Uterus (tissue), 4 donors: ENCODE measurements at regions of chr13 and their contacts with region 1.

Region 1: DNA sequence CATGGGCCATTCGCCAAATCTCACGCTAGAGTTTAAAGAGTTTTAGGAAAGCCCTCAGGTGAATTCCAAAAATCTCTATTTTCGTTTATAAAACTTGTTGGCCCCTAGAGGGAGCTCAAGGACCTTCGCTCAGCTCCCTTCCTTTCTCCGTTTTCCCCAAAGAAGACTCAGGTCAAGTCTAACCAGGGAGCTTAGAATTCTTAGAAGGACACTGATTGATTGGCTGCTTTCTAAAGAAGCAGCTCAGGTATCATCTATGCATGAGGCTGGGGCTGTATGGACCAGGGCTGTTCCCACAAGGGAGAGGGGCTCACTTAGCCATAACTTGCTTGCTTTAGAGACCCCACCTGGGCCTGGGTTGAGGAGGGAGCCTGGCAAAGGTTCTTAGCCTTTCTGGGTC is 20.5 kb downstream of the DZIP1 start:
- DNase-seq: peak in 1 of 2 donors; percentile 16
- H3K4me3 ChIP-seq: no peak overlapping the region
- H3K27ac ChIP-seq: no peak overlapping the region
- H3K4me1 ChIP-seq: no peaks in the 10 kb centered on the region
- H3K27me3 ChIP-seq: no peaks in the 10 kb centered on the region
- CTCF ChIP-seq: peak; percentile 60 to 72 (median 66)
- POLR2A ChIP-seq: no peak

Region 2: GRCh38 chr13:95403828-95404522 is 220.0 kb before region 1 on chr13:
- intact Hi-C with region 1: no loop called
- DNase-seq: peak; percentile 67 to 81
- H3K4me3 ChIP-seq: peak overlapping the region in 1 of 2 donors; percentile 5
- H3K27ac ChIP-seq: no peak overlapping the region
- H3K4me1 ChIP-seq: no peaks in the 10 kb centered on the region
- H3K27me3 ChIP-seq: no peaks in the 10 kb centered on the region
- CTCF ChIP-seq: peak; percentile 85 to 93 (median 91)
- POLR2A ChIP-seq: no peak

Region 3: DNA sequence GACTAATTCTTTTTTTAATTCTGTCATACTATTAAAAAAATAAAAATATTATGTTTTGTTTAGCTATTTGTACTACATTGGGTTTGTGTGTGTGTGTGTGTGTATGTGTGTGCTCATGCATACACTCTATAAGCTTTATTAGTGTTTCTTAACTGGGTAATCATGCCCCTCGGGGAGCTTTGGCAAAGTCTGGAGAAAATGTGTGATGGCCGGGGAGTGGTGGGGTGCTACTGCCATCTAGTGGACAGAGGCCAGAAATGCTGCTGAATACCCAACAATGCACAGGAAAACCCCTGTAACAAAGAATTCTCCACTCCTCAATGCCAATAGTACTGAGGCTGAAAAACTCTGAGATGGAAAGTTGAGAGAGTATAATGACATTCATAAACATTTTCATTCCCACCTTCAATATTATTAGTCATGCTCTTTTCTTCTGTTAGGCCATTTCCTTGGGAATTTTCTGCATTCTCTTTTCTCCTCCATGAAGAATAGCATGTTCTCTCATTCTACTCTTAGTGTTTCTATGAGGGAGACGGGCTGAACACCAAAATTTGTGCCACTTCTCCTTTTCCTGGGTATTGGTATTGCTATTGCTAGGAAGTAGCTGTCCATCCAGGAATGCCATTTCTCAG is 210.2 kb after region 1 on chr13:
- intact Hi-C with region 1: loop called (anchors 10 kb)
- DNase-seq: peak; percentile 47 to 68
- H3K4me3 ChIP-seq: no peak overlapping the region
- H3K27ac ChIP-seq: no peak overlapping the region
- H3K4me1 ChIP-seq: no peaks in the 10 kb centered on the region
- H3K27me3 ChIP-seq: no peaks in the 10 kb centered on the region
- CTCF ChIP-seq: peak; percentile 83 to 89 (median 86)
- POLR2A ChIP-seq: no peak